ENCODE measurements at regions of chr1 and their contacts with region 1.

Region 1: DNA sequence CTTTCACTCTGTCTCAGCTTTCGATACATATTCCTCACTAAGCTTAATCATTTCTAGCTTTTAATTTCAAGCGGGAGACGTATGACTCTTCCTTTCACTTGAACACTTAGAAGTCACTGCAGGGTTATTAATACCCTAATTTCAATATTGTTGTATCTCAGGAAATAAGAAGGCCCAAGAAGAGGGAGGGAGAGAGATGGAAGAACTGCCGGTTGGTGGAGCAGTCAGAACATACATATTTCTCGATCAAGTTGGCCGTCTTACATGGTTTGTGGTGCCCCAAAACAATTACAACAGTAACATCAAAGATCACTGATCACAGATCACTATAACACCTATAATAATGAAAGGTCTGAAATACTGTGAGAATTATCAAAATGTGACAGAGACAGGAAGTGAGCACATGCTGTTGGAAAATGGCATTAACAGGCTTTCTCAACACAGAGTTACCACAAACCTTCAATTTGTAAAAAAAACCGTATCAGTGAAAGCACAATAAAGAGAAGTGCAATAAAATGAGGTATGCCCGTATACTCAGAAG is 145.4 kb upstream of the HP1BP3 start:
- DNase-seq: peak; percentile 72
- H3K4me3 Mint-ChIP-seq: no peak overlapping the region
- H3K27ac Mint-ChIP-seq: peak overlapping the region; percentile 79
- H3K4me1 Mint-ChIP-seq: peaks cover 36% of the 10 kb centered on the region
- H3K27me3 Mint-ChIP-seq: no peaks in the 10 kb centered on the region

Region 2: GRCh38 chr1:20696397-20697329 is 235.8 kb before region 1 on chr1:
- CTCF ChIA-PET with region 1: interaction called, 3 read pairs
- intact Hi-C with region 1: loop called (anchors 5 kb)
- DNase-seq: peak; percentile 86
- H3K4me3 Mint-ChIP-seq: peak overlapping the region; percentile 77
- H3K27ac Mint-ChIP-seq: peak overlapping the region; percentile 50
- H3K4me1 Mint-ChIP-seq: peaks cover 5% of the 10 kb centered on the region
- H3K27me3 Mint-ChIP-seq: no peaks in the 10 kb centered on the region

Region 3: GRCh38 chr1:20867847-20868246 is 64.7 kb before region 1 on chr1:
- CTCF ChIA-PET with region 1: no interaction called
- intact Hi-C with region 1: loop called (anchors 5 kb)
- DNase-seq: no peak
- H3K4me3 Mint-ChIP-seq: no peak overlapping the region
- H3K27ac Mint-ChIP-seq: no peak overlapping the region
- H3K4me1 Mint-ChIP-seq: peaks cover 11% of the 10 kb centered on the region
- H3K27me3 Mint-ChIP-seq: no peaks in the 10 kb centered on the region

Region 4: DNA sequence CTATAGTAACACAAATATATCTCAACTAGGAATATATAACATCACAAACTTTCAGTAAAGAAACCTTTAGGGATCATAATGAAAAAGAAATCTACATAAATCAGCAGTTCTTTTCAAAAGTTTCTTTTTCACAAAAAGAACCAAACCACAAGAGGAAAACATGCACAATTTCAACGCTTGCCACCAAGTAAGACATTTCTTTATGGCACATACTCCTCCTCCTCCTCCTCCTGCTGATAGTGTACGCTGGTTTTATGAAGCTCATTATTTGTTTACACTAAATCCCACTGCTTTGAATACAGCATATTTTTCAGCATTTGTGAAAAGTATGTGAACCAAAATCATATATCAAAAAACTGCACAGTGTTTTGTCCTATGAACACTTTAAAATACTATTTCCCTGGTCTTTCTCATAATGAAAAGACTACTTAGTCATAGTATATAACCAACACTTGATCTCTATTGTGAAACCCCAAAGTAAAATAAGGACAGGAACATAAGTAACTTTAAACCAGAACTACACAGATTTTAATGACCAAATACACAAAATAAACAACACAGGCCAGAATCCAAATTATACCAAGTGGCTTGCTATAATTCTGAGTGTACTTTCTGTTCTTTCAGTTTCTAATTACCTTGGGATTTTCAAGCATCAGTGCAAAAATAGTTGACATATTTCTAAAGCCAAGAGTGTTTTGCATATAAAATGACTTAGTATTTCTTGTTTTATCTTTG is 60.0 kb after region 1 on chr1:
- CTCF ChIA-PET with region 1: no interaction called
- intact Hi-C with region 1: loop called (anchors 1 kb)
- DNase-seq: no peak
- H3K4me3 Mint-ChIP-seq: no peak overlapping the region
- H3K27ac Mint-ChIP-seq: peak overlapping the region; percentile 66
- H3K4me1 Mint-ChIP-seq: peaks cover 19% of the 10 kb centered on the region
- H3K27me3 Mint-ChIP-seq: no peaks in the 10 kb centered on the region

Region 5: DNA sequence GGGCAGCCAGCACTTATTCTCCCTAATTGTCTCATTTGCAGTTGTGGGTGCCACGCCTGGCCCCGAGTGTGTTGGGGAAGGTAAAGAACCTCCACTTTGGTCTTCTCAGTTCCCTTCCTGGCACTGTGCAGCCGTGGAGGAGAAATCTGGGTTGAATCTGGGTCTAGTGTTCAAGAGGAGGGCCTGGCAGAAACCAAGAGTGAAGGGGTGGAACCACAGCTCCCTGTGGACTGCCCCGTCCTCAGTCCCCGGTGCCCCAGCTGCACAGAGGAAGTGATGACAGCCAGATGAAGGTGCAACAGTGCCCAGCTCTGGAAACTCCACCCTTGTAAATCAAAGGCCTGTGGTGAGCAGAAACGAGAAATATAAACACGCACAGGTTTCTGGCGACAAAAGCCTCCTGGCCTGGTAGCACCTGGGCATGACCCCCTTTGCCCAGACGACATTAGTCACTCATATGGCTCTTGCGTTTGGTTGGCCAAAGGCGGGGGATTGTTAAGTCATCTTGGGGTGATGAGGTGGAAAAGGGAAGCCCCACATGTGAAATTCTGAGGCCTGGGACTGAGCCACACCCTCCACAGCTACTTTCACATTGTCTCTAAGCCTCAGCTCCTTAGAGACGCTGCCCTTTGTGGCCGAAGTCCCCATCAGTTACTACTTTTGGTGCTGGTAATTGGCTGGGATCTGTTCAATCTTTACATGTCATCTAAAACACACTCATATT is 361.9 kb after region 1 on chr1:
- CTCF ChIA-PET with region 1: no interaction called
- intact Hi-C with region 1: loop called (anchors 1 kb)
- DNase-seq: peak; percentile 97
- H3K4me3 Mint-ChIP-seq: peak overlapping the region; percentile 67
- H3K27ac Mint-ChIP-seq: peak overlapping the region; percentile 99
- H3K4me1 Mint-ChIP-seq: peaks cover 89% of the 10 kb centered on the region
- H3K27me3 Mint-ChIP-seq: no peaks in the 10 kb centered on the region